PC-9 (cell line): ENCODE measurements at regions of chr12 and their contacts with region 1.

Region 1: DNA sequence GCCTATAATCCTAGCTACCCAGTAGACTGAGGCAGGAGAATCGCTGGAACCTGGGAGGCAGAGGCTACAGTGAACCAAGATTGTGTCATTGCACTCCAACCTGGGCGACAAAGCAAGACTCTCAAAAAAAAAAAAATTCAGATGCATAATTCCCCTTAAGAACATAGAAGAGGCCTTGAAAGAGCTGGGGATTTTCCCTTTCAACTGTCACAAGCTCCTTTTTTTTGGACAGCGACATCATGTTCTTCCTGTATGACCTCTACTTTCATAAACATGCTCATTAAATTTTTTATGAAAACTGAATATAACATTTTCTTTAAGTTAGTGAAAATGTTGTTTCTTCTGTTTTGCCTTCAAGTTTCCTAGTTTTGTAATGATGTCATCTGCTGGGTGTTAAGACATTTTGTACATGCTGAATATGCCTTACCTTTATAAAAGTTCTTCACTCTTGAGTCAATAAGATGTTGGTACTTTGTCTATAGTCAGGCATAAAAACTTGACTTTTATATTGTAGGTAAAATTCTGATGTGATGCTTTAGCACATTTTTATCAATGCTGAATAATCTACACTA is 76.0 kb downstream of the PTHLH start:
- DNase-seq: no peak
- H3K4me3 ChIP-seq: no peak overlapping the region
- H3K27ac ChIP-seq: no peak overlapping the region
- H3K4me1 ChIP-seq: no peaks in the 10 kb centered on the region
- H3K27me3 ChIP-seq: no peaks in the 10 kb centered on the region
- CTCF ChIP-seq: no peak

Region 2: DNA sequence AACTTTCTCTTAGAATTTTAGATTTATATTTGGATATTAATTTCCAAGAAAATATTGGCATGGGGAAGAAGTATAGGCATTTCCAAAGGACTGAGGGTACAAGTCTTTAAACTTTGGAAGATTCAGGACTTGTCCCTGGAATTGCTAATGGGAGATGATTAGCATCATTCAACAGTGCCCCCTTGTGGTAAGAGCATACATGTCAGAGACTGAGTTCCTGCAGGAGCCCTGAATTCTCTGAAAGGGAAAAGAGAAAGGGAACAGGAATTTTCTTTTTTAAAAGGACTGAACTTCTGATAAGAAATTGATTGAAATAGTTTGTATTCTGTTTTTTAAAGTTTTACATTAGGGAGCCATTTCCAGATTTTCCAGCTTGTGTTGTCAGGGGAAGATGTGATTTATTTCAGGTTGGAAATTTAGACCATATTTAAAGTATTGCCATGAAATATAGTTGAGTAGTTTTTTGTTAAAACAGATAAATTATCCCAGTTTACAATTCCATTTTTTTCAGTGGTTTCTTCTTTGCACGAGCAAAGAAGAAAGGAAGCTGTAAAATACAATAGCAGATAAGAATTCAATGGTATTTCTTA is 244.2 kb before region 1 on chr12:
- CTCF ChIA-PET with region 1: no interaction called
- POLR2A ChIA-PET with region 1: no interaction called
- intact Hi-C with region 1: no loop called
- DNase-seq: peak; percentile 42 to 58
- H3K4me3 ChIP-seq: no peak overlapping the region
- H3K27ac ChIP-seq: no peak overlapping the region
- H3K4me1 ChIP-seq: no peaks in the 10 kb centered on the region
- H3K27me3 ChIP-seq: no peaks in the 10 kb centered on the region
- CTCF ChIP-seq: peak; percentile 95

Region 3: DNA sequence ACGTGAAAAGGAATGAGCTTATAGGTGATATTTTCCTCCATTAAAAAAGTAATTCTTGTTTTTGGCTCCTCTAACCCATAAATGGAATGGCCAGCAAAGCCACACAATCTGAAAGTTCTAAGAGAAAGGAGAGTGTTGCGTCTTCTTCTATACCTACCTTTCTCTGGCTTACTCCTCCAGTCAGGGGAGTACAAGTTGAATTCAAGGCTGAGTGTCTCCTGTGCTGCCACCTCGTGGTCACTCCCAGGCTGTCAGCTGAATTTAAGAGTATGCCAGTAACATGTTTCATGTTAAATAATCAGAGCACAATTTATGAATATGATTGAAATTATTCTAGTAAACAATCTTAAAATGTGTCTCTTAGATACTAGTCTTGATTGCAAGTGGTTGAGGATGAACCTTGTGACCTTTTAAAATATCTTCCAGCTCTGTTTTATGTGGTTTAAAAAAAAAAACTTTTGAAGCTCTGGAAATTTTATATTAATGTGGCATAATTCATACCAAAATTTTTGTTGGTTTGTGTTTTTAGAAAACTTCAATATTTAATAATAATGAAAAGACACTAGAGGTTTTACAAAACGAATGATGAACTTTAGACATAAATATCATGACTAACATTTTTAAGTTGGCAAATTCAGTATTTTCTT is 44.4 kb after region 1 on chr12:
- CTCF ChIA-PET with region 1: no interaction called
- POLR2A ChIA-PET with region 1: interaction called, 14 read pairs
- intact Hi-C with region 1: no loop called
- DNase-seq: peak; percentile 64 to 81
- H3K4me3 ChIP-seq: no peak overlapping the region
- H3K27ac ChIP-seq: no peak overlapping the region
- H3K4me1 ChIP-seq: no peaks in the 10 kb centered on the region
- H3K27me3 ChIP-seq: no peaks in the 10 kb centered on the region
- CTCF ChIP-seq: peak; percentile 87